ENCODE measurements at regions of chr10 and their contacts with region 1.

Region 1: GRCh38 chr10:48306265-48306869 is at the start of gene MAPK8:
- DNase-seq: peak; percentile 69
- ATAC-seq: peak; percentile 81
- H3K4me3 ChIP-seq: peak within 1 kb of the TSS; percentile 92
- H3K27ac ChIP-seq: peak within 1 kb of the TSS; percentile 66
- H3K4me1 ChIP-seq: peaks cover 14% of the 10 kb centered on the region
- H3K27me3 ChIP-seq: no peaks in the 10 kb centered on the region
- CTCF ChIP-seq: no peak
- EP300 ChIP-seq: no peak
- POLR2A ChIP-seq: peak; percentile 95
- RAD21 ChIP-seq: no peak
- polyA plus RNA-seq, gene MAPK8: 3.9 to 4.3 TPM

Region 2: DNA sequence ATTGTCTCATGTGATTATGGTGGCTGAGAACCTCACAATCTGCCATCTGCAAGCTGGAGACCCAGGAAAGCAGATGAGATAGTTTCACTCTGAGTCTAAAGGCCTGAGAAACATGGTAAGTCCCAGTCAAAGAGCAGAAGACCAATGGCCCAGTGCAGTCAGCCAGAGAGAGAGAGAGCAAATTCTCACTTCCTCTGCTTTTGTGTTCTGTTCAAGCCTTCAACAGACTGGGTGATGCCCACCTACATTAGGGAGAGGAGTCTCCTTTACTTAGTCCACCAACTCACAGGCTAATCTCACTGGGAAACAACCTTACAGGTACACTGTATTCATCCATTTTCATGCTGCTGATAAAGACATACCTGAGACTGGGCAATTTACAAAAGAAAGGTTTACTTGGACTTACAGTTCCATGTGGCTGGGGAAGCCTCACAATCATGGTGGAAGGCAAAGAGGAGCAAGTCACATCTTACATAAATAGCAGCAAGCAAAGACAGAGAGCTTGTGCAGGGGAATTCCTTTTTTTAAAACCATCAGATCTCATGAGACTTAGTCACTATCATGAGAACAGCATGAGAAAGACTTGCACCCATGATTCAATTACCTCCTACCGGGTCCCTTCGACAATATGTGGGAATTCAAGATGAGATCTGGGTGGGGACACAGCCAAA is 27.2 kb before region 1 on chr10:
- CTCF ChIA-PET with region 1: interaction called, 8 read pairs
- POLR2A ChIA-PET with region 1: interaction called, 4 read pairs
- RAD21 ChIA-PET with region 1: interaction called, 16 read pairs
- SMC1A ChIA-PET with region 1: interaction called, 5 read pairs
- in situ Hi-C with region 1: no loop called
- intact Hi-C with region 1: loop called (anchors 1 kb)
- DNase-seq: peak; percentile 99
- ATAC-seq: peak; percentile 88
- H3K4me3 ChIP-seq: no peak overlapping the region
- H3K27ac ChIP-seq: peak overlapping the region; percentile 96
- H3K4me1 ChIP-seq: peaks cover 44% of the 10 kb centered on the region
- H3K27me3 ChIP-seq: no peaks in the 10 kb centered on the region
- CTCF ChIP-seq: no peak
- EP300 ChIP-seq: peak; percentile 67 to 89; a peak in 3 of 4 replicates
- POLR2A ChIP-seq: peak; percentile 54
- RAD21 ChIP-seq: 0 out of 2 replicates have a peak, but pooled peaks have one; percentile 0

Region 3: DNA sequence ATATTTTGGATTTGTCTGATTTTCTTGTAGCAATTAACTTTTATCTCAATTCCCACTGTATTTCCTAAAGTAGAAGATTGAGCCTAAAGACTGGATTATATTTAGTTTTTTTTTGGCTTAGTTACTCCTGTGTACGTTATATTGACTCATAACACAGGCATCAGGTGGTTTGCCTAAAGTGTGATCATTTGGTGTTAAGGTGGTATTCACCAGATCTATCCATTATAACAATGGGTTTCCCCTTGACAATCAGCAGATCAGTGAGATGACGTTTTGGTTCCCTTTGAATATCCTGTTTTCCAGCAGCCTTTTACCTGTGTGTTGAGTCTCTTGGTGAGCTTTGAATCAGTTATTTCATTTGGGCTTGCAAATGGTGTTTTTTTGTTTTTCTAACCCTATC is 18.2 kb after region 1 on chr10:
- CTCF ChIA-PET with region 1: interaction called, 13 read pairs
- POLR2A ChIA-PET with region 1: interaction called, 9 read pairs
- RAD21 ChIA-PET with region 1: interaction called, 4 read pairs
- SMC1A ChIA-PET with region 1: interaction called, 43 read pairs
- in situ Hi-C with region 1: no loop called
- intact Hi-C with region 1: no loop called
- DNase-seq: no peak
- ATAC-seq: peak; percentile 90
- H3K4me3 ChIP-seq: no peak overlapping the region
- H3K27ac ChIP-seq: no peak overlapping the region
- H3K4me1 ChIP-seq: no peaks in the 10 kb centered on the region
- H3K27me3 ChIP-seq: no peaks in the 10 kb centered on the region
- CTCF ChIP-seq: no peak
- EP300 ChIP-seq: peak; percentile 50 to 60; a peak in 2 of 4 replicates
- POLR2A ChIP-seq: no peak
- RAD21 ChIP-seq: no peak

Region 4: DNA sequence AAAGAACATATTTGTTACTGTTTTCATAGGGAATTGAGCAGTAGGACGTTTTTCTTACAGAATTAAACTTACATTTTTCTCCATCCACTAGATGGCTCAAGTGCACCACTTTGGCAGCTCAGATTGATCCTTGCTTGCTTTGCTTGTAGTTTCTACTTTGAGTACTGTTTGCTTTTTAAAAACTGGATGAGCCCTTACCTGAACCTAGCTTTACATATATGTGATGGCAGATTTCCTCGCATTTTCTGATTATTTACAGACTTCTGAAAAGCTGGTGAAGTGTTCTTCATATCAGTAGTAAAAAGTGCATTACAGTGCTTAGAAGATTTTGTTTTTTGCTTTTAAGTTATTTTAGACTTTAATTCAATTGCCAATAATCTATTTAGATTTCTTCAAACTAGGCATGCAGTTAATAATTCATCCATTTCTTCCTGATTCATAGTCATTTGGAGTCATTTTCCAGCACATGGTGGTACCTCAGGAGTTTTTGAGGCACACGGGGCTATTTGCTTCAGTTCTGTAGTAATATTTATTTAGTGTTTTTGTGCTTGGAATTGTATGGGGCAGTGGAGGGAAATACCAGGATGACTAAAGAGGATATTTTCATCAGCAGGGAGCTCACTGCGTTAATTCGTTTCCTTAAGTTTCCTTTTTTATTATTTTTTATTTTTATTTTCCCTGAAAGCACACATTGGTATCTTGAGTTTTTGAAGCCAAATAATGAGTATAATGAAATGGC is 57.4 kb after region 1 on chr10:
- CTCF ChIA-PET with region 1: interaction called, 24 read pairs
- POLR2A ChIA-PET with region 1: no interaction called
- RAD21 ChIA-PET with region 1: interaction called, 32 read pairs
- SMC1A ChIA-PET with region 1: interaction called, 22 read pairs
- in situ Hi-C with region 1: no loop called
- intact Hi-C with region 1: no loop called
- DNase-seq: peak; percentile 51
- ATAC-seq: peak; percentile 91
- H3K4me3 ChIP-seq: no peak overlapping the region
- H3K27ac ChIP-seq: no peak overlapping the region
- H3K4me1 ChIP-seq: no peaks in the 10 kb centered on the region
- H3K27me3 ChIP-seq: no peaks in the 10 kb centered on the region
- CTCF ChIP-seq: peak; percentile 55 to 83 (median 74)
- EP300 ChIP-seq: no peak
- POLR2A ChIP-seq: no peak
- RAD21 ChIP-seq: peak; percentile 93

Region 5: DNA sequence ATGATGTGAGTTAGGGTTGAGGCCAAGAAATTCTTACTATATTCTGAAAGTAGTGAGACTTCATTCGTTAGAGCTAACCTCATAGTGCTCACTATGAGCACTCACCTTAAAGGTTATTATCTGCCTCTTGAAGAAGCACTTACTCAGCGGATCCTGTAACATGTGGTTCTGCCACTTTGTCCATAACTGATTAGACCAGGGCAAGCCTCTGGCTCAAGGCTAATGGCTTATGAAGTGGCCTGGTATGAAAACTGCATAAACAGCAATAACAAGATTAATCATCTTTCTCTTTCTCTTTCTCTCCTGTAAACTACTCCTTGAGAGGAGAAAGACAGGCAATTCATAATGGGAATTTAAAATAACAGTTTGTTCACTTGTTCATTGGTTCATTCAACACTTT is 82.9 kb after region 1 on chr10:
- CTCF ChIA-PET with region 1: interaction called, 13 read pairs
- POLR2A ChIA-PET with region 1: no interaction called
- RAD21 ChIA-PET with region 1: interaction called, 3 read pairs
- SMC1A ChIA-PET with region 1: interaction called, 3 read pairs
- in situ Hi-C with region 1: no loop called
- intact Hi-C with region 1: no loop called
- DNase-seq: no peak
- ATAC-seq: peak; percentile 53
- H3K4me3 ChIP-seq: no peak overlapping the region
- H3K27ac ChIP-seq: no peak overlapping the region
- H3K4me1 ChIP-seq: peaks cover 6% of the 10 kb centered on the region; the same call in 1 of the 2 replicates
- H3K27me3 ChIP-seq: no peaks in the 10 kb centered on the region
- CTCF ChIP-seq: no peak
- EP300 ChIP-seq: no peak
- POLR2A ChIP-seq: no peak
- RAD21 ChIP-seq: no peak

Region 6: GRCh38 chr10:48649349-48649944 is 343.1 kb after region 1 on chr10:
- CTCF ChIA-PET with region 1: no interaction called
- POLR2A ChIA-PET with region 1: no interaction called
- RAD21 ChIA-PET with region 1: no interaction called
- SMC1A ChIA-PET with region 1: no interaction called
- in situ Hi-C with region 1: no loop called
- intact Hi-C with region 1: no loop called
- DNase-seq: no peak
- ATAC-seq: peak; percentile 36; the same call in 2 of the 3 replicates
- H3K4me3 ChIP-seq: no peak overlapping the region
- H3K27ac ChIP-seq: no peak overlapping the region
- H3K4me1 ChIP-seq: peaks cover 7% of the 10 kb centered on the region; the same call in 1 of the 2 replicates
- H3K27me3 ChIP-seq: no peaks in the 10 kb centered on the region
- CTCF ChIP-seq: peak; percentile 3 to 24 (median 23); a peak in 2 of 6 replicates
- EP300 ChIP-seq: no peak
- POLR2A ChIP-seq: no peak
- RAD21 ChIP-seq: no peak

Region 7: GRCh38 chr10:49398000-49398861 is 1091.9 kb after region 1 on chr10:
- CTCF ChIA-PET with region 1: no interaction called
- POLR2A ChIA-PET with region 1: no interaction called
- RAD21 ChIA-PET with region 1: no interaction called
- SMC1A ChIA-PET with region 1: no interaction called
- in situ Hi-C with region 1: no loop called
- intact Hi-C with region 1: no loop called
- DNase-seq: no peak
- ATAC-seq: peak; percentile 27; the same call in 2 of the 3 replicates
- H3K4me3 ChIP-seq: no peak overlapping the region
- H3K27ac ChIP-seq: no peak overlapping the region
- H3K4me1 ChIP-seq: no peaks in the 10 kb centered on the region
- H3K27me3 ChIP-seq: peaks cover 13 to 17% of the 10 kb centered on the region in 2 experiments
- CTCF ChIP-seq: no peak
- EP300 ChIP-seq: no peak
- POLR2A ChIP-seq: no peak
- RAD21 ChIP-seq: no peak